Endothelial cell of umbilical vein (primary cell): ENCODE measurements at regions of chr13 and their contacts with region 1.

Region 1: GRCh38 chr13:40540328-40541044 is 126.0 kb downstream of the FOXO1 start:
- DNase-seq: peak; percentile 96
- H3K4me3 ChIP-seq: no peak overlapping the region
- H3K27ac ChIP-seq: peak overlapping the region; percentile 80
- H3K4me1 ChIP-seq: peaks cover 18% of the 10 kb centered on the region
- H3K27me3 ChIP-seq: no peaks in the 10 kb centered on the region
- CTCF ChIP-seq: no peak
- POLR2A ChIP-seq: no peak

Region 2: GRCh38 chr13:40477623-40478608 is 62.6 kb before region 1 on chr13:
- CTCF ChIA-PET with region 1: no interaction called
- POLR2A ChIA-PET with region 1: no interaction called
- dilution Hi-C with region 1: no loop called
- intact Hi-C with region 1: loop called (anchors 1 kb)
- DNase-seq: peak; percentile 94
- H3K4me3 ChIP-seq: peak overlapping the region in 1 of 3 experiments; percentile 10
- H3K27ac ChIP-seq: peak overlapping the region; percentile 92
- H3K4me1 ChIP-seq: peaks cover 32% of the 10 kb centered on the region
- H3K27me3 ChIP-seq: no peaks in the 10 kb centered on the region
- CTCF ChIP-seq: no peak
- POLR2A ChIP-seq: peak; percentile 36

Region 3: DNA sequence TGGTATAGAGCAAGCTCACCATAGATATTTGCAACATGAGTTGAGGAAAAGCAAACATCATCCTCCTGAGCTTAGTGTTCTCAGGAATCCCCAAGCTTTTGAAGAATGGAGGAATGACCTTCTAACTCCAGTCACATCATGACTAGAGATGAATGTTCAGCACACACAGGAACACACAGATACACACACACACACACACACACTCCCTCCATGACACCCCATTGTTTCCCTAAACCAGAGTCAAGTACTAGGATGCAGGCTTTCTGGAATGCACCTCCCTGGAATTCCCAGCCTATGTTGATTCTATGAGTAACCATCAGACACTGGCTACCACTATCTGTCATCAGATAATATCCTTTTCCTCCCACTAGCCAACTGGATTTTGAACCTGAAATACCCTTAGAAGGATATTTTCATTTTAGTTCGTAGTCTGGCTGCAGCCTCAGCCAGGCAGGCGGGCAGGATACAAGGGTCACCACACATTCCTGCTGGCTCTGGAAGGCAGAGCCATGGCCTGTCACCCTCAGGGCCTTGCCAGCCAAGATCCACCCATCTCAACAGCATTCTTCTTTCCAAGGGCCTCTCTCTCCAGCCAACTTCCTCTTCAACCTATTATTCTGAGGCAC is 36.4 kb before region 1 on chr13:
- CTCF ChIA-PET with region 1: interaction called, 4 read pairs
- POLR2A ChIA-PET with region 1: no interaction called
- dilution Hi-C with region 1: no loop called
- intact Hi-C with region 1: loop called (anchors 1 kb)
- DNase-seq: peak; percentile 99
- H3K4me3 ChIP-seq: no peak overlapping the region
- H3K27ac ChIP-seq: peak overlapping the region; percentile 99
- H3K4me1 ChIP-seq: peaks cover 51% of the 10 kb centered on the region
- H3K27me3 ChIP-seq: no peaks in the 10 kb centered on the region
- CTCF ChIP-seq: no peak
- POLR2A ChIP-seq: peak; percentile 74

Region 4: DNA sequence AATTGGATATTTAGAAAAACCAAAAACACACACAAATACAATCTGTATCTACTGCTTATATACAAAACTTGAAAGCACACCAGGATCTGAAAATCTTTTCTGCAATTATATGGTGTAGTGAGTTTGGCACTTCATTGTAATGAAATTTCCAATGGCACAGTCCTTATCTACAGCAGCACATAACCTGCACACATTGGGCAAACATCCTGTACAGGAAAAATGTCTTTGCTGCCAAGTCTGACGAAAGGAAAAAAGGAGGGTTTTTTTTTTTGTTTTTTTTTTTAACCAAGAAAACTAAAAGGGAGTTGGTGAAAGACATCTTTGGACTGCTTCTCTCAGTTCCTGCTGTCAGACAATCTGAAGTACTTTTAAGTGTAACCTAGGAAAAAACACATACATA is 18.2 kb after region 1 on chr13:
- CTCF ChIA-PET with region 1: interaction called, 9 read pairs
- POLR2A ChIA-PET with region 1: no interaction called
- dilution Hi-C with region 1: no loop called
- intact Hi-C with region 1: loop called (anchors 1 kb)
- DNase-seq: peak; percentile 95
- H3K4me3 ChIP-seq: peak overlapping the region in 1 of 3 experiments; percentile 1
- H3K27ac ChIP-seq: peak overlapping the region; percentile 61
- H3K4me1 ChIP-seq: peaks cover 56% of the 10 kb centered on the region
- H3K27me3 ChIP-seq: no peaks in the 10 kb centered on the region
- CTCF ChIP-seq: no peak
- POLR2A ChIP-seq: peak; percentile 35

Region 5: DNA sequence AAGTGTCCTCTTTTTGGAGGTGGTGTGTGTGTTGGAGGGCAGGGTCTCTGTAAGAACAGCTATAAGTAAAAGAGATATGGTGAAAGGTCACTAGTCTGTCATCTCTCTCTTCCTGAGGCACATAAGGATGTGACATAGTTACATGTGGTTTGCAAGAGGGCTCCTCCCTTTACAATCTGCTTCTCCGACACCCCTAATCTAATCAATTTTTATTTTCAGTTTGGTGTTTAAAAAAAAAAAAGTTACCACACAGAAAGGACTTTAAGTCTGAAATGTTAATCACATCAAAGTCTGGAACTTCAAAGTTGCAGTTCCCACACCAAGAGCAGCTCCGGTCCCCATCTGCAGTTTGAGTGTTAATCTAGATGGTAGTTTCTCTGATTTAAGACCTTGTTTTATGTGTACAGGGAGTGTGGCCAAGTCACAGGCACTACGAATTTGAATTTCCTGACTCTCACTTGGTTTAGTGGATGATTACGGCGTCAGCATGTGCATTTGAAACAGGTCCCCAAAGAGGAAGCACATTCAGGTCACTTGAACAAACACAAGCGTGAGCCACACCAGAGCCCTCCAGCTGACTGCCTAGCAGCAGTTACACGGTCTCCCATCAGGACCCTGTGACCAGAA is 72.8 kb after region 1 on chr13:
- CTCF ChIA-PET with region 1: no interaction called
- POLR2A ChIA-PET with region 1: no interaction called
- dilution Hi-C with region 1: no loop called
- intact Hi-C with region 1: loop called (anchors 2 kb)
- DNase-seq: peak; percentile 70
- H3K4me3 ChIP-seq: no peak overlapping the region
- H3K27ac ChIP-seq: peak overlapping the region; percentile 98
- H3K4me1 ChIP-seq: peaks cover 75% of the 10 kb centered on the region
- H3K27me3 ChIP-seq: no peaks in the 10 kb centered on the region
- CTCF ChIP-seq: no peak
- POLR2A ChIP-seq: no peak